Activated T-helper 2 cell treated with anti-CD3 and anti-CD28 coated beads, Interferon-gamma antibody, Interleukin-2, Interleukin-4, amounts not matched to agents 10 μg/mL and 5 μg/mL and 100 μg/mL, durations not matched to agents 14 hours and 24 hours and 36 hours (primary cell): ENCODE measurements at regions of chr22 and their contacts with region 1.

Region 1: DNA sequence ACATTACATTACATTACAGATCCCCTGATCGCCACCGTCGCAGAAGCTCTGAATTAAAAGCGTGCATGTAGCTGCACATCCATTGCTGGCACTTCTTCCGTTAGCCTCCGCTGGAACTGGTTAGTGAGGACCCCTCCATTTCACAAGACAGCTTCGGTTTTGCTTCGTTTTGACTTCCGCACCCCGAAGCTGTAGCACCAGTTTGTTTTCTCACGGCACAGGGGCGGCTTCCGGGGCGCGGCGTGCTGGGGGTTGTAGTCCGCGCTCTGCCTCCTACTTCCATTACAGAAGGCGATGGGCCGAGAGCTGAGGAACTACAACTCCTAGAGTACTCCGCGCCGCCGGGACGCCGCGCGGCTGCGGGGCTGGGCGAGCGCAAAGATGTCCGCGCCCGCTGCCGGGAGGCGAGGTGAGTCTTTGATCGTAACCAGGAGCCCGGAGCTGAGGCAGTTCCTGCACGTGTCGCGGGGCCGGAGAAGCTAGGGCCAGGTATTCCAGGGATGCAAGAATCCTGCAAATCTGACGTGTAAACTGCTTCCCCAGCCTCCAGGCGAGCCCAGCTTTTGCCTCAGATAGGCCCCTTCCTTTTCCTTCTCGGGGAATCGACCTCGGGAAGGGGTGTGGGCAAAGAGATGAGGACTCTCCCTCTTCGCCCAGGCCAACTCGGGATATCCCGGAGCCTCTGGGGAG is at the start of gene PEX26:
- DNase-seq: peak; percentile 95
- H3K4me3 Mint-ChIP-seq: peak within 1 kb of the TSS; percentile 93
- H3K27ac Mint-ChIP-seq: peak within 1 kb of the TSS; percentile 96
- H3K4me1 Mint-ChIP-seq: peaks cover 42% of the 10 kb centered on the region
- H3K27me3 Mint-ChIP-seq: no peaks in the 10 kb centered on the region
- total RNA-seq, gene PEX26: 47.3 and 47.8 TPM in 2 replicates

Region 2: GRCh38 chr22:17742527-17742902 is 335.3 kb before region 1 on chr22:
- intact Hi-C with region 1: loop called (anchors 2 kb)
- DNase-seq: peak; percentile 44
- H3K4me3 Mint-ChIP-seq: no peak overlapping the region
- H3K27ac Mint-ChIP-seq: no peak overlapping the region
- H3K4me1 Mint-ChIP-seq: no peaks in the 10 kb centered on the region
- H3K27me3 Mint-ChIP-seq: no peaks in the 10 kb centered on the region

Region 3: DNA sequence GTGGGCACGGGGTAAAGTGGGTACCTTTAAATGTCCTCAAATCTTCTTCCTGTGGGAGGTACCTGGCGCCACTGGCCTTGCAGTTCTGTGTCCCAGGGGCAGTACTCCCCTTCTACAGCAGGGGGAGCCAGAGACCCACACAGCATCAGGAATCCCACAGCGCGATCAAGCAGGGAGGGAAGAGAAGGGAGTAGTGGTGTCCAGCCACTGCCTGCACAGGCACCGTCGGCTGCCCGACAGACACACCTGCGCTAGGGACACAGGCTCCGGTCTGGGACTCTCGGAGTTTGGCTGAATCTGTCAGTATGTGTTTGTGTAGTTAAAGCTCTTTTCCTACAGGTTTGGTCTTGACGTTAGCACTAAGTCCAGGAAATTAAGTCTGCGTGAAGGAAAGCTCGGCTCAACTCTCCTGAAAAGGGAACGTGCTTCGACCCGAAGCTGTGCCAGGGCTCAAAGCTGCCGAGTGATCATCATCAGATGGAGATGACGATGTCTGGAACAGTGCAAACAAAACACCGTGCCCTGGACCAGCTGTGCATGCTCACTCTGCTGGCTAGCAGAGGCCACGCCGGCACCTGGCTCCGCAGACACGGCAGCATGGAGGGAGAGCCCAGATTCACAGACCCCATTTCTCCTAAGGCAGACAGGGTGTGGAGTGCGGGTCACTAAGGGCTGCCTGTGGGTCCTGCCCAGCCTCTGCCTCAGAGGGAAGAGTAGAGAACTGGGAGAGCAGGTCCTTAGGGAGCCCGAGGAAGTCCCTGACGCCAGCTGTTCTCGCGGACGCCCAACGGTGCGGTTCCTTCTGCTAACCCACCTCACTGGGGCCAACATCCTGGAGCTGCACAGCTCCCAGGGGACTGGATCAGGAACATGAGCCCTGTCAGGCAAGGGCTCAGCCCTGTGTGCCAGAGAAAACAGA is 247.5 kb before region 1 on chr22:
- intact Hi-C with region 1: loop called (anchors 1 kb)
- DNase-seq: peak; percentile 70
- H3K4me3 Mint-ChIP-seq: no peak overlapping the region
- H3K27ac Mint-ChIP-seq: no peak overlapping the region
- H3K4me1 Mint-ChIP-seq: peaks cover 2% of the 10 kb centered on the region
- H3K27me3 Mint-ChIP-seq: no peaks in the 10 kb centered on the region

Region 4: DNA sequence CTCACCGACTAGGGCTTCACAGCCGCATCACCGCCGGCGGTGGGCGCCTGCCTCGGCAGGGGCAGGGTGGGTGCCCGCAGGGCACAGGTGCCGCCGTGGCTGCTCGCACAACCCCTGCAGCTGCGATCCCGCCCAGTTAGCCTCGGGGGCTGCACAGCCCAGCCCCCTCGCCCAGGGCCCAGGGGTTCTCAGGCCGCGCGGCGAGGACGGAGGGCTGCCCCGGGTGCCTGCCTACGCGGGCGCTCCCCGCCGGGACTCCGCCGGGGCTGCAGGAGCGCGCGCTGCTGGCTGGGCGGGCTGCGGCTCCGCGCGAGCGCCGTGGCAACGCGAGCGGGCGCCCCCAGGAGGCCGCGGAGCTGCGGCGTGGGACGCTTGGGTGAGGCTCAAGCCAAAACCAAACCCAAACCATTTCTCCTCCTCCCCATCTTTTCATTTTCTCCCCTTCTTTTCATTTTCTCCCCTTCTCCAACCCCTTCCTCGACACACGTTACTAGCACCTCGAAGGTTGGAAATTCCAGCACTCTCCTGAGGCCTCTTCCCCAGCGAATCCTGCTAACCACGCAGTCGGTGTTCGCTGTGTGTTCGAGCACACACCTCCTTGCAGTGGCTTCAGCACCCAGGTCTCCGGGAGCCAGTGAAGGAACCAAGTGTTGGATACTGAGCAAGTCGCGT is 53.4 kb before region 1 on chr22 and contains the start of gene MICAL3:
- intact Hi-C with region 1: loop called (anchors 2 kb)
- DNase-seq: peak; percentile 57
- H3K4me3 Mint-ChIP-seq: peak within 1 kb of the TSS; percentile 83
- H3K27ac Mint-ChIP-seq: no peak within 1 kb of the TSS
- H3K4me1 Mint-ChIP-seq: peaks cover 10% of the 10 kb centered on the region
- H3K27me3 Mint-ChIP-seq: peaks cover 55% of the 10 kb centered on the region
- total RNA-seq, gene MICAL3: 40.6 and 41.8 TPM in 2 replicates

Region 5: GRCh38 chr22:18148293-18148965 is 70.6 kb after region 1 on chr22:
- intact Hi-C with region 1: loop called (anchors 2 kb)
- DNase-seq: no peak
- H3K4me3 Mint-ChIP-seq: peak overlapping the region; percentile 86
- H3K27ac Mint-ChIP-seq: no peak overlapping the region
- H3K4me1 Mint-ChIP-seq: peaks cover 32% of the 10 kb centered on the region
- H3K27me3 Mint-ChIP-seq: no peaks in the 10 kb centered on the region